H1 (cell line): ENCODE measurements at regions of chr20 and their contacts with region 1.

Region 1: DNA sequence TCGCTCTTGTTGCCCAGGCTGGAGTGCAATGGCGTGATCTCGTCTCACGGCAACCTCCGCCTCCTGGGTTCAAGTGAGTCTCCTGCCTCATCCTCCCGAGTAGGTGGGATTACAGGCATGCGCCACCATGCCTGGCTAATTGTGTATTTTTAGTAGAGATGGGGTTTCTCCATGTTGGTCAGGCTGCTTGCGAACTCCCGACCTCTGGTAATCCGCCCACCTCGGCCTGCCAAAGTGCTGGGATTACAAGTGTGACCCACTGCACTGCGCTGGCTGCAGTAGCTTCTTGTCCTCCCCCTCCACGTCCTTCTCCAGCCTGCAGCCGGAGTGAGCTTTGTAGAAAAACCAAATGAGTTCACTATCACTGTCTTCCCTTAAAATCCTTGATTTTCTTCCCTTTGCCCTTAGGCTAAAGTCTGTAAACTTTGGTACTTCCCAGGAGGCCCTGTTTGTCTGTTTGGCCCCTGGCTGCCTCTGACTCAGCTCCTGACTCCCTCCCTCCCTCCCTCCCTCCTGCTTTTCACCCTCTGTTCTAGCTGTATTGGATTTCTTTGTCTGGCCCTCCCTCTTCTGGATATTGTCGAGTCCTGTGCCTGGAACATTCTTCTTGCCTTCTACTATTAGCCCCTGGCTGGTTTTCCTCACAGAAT is 12.9 kb downstream of the PARD6B start:
- DNase-seq: peak in 1 of 2 experiments; percentile 46
- H3K4me3 ChIP-seq: no peak overlapping the region
- H3K27ac ChIP-seq: 0 out of 2 replicates have a peak overlapping the region, but pooled peaks have one; percentile 45
- H3K4me1 ChIP-seq: peaks cover 2 to 8% (median 5%) of the 10 kb centered on the region in 4 experiments; a peak in 4 of 7 replicates
- H3K27me3 ChIP-seq: no peaks in the 10 kb centered on the region
- CTCF ChIP-seq: 0 out of 4 replicates have a peak, but pooled peaks of 1 of the 3 experiments have one; percentile 9
- EP300 ChIP-seq: no peak
- POLR2A ChIP-seq: no peak
- RAD21 ChIP-seq: peak; percentile 23 to 45; a peak in 2 of 4 replicates

Region 2: DNA sequence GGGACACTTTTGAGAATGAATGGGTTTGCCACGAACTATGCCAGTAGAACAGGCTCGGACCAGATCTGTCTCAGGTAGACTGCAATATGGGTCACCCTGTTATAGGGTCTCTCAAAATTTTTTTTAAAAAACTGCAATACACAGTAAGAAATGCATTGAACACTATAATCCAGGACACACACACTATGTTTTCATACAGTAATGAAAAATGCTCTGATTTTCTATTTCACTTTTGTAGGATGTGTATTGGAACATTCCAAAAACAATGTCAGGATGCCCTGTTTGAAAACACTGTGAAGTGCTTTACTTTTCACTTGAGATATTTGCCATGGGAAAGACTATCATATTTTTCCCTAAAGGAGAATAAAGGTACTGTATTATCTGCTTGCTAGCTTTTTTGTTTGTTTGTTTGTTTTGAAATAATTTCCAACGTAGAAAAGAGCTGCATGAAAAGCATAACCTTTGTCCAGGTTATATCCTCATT is 12.2 kb after region 1 on chr20:
- CTCF ChIA-PET with region 1: interaction called, 12 read pairs
- POLR2A ChIA-PET with region 1: interaction called, 12 read pairs
- DNase-seq: no peak
- H3K4me3 ChIP-seq: no peak overlapping the region
- H3K27ac ChIP-seq: no peak overlapping the region
- H3K4me1 ChIP-seq: peaks cover 0 to under 1% (median 0%) of the 10 kb centered on the region in 4 experiments; a peak in 2 of 7 replicates
- H3K27me3 ChIP-seq: no peaks in the 10 kb centered on the region
- CTCF ChIP-seq: no peak
- EP300 ChIP-seq: no peak
- POLR2A ChIP-seq: no peak
- RAD21 ChIP-seq: no peak

Region 3: GRCh38 chr20:50844430-50845100 is 100.3 kb after region 1 on chr20:
- CTCF ChIA-PET with region 1: no interaction called
- POLR2A ChIA-PET with region 1: no interaction called
- DNase-seq: no peak
- H3K4me3 ChIP-seq: no peak overlapping the region
- H3K27ac ChIP-seq: no peak overlapping the region
- H3K4me1 ChIP-seq: peaks cover 0 to 6% (median 4%) of the 10 kb centered on the region in 4 experiments; a peak in 3 of 7 replicates
- H3K27me3 ChIP-seq: no peaks in the 10 kb centered on the region
- CTCF ChIP-seq: no peak
- EP300 ChIP-seq: no peak
- POLR2A ChIP-seq: no peak
- RAD21 ChIP-seq: no peak